SK-N-SH (cell line): ENCODE measurements at regions of chr10 and their contacts with region 1.

Region 1: DNA sequence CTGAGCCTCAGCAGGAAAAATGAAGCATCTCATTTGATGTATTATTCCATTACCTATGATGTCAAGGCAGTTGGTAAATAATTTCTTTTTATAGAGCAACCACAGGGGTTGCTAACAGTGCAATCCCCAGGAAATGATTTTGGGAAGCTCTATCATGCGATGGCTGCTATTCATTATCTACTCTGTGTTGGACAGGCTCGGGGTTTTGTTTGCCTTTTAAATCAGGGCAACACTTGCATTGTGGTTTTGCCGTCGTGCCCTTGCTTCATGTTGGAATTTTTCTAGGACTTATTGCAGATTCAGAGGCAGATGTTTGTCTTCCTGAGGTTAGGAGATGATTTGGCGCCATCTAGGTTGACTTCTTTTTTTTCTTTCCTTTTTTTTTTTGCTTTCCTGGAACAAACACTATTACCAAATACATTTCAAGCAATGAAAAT is 128.4 kb downstream of the BICC1 start:
- DNase-seq: peak; percentile 20
- H3K4me3 ChIP-seq: peak overlapping the region in 1 of 2 experiments; percentile 29; a peak in 1 of 4 replicates
- H3K27ac ChIP-seq: peak overlapping the region; percentile 86 to 88
- H3K4me1 ChIP-seq: peaks cover 17 to 38% of the 10 kb centered on the region in 2 experiments; a peak in 3 of 4 replicates
- H3K27me3 ChIP-seq: no peaks in the 10 kb centered on the region
- CTCF ChIP-seq: peak; percentile 61
- EP300 ChIP-seq: peak; percentile 61 to 87
- RAD21 ChIP-seq: peak; percentile 73

Region 2: GRCh38 chr10:58590152-58590840 is 50.8 kb before region 1 on chr10:
- CTCF ChIA-PET with region 1: interaction called, 10 read pairs
- POLR2A ChIA-PET with region 1: no interaction called
- DNase-seq: peak; percentile 5
- H3K4me3 ChIP-seq: no peak overlapping the region
- H3K27ac ChIP-seq: peak overlapping the region; percentile 80 to 81
- H3K4me1 ChIP-seq: peaks cover 5% of the 10 kb centered on the region in 2 experiments; a peak in 3 of 4 replicates
- H3K27me3 ChIP-seq: no peaks in the 10 kb centered on the region
- CTCF ChIP-seq: no peak
- EP300 ChIP-seq: no peak; a peak in 1 of 4 replicates
- RAD21 ChIP-seq: no peak